AG04450 (cell line): ENCODE measurements at regions of chr20 and their contacts with region 1.

Region 1: GRCh38 chr20:54438145-54438544 is 37.2 kb upstream of the DOK5 start:
- DNase-seq: no peak
- H3K4me3 ChIP-seq: no peak overlapping the region
- H3K27ac ChIP-seq: no peak overlapping the region
- H3K27me3 ChIP-seq: no peaks in the 10 kb centered on the region
- CTCF ChIP-seq: no peak

Region 2: DNA sequence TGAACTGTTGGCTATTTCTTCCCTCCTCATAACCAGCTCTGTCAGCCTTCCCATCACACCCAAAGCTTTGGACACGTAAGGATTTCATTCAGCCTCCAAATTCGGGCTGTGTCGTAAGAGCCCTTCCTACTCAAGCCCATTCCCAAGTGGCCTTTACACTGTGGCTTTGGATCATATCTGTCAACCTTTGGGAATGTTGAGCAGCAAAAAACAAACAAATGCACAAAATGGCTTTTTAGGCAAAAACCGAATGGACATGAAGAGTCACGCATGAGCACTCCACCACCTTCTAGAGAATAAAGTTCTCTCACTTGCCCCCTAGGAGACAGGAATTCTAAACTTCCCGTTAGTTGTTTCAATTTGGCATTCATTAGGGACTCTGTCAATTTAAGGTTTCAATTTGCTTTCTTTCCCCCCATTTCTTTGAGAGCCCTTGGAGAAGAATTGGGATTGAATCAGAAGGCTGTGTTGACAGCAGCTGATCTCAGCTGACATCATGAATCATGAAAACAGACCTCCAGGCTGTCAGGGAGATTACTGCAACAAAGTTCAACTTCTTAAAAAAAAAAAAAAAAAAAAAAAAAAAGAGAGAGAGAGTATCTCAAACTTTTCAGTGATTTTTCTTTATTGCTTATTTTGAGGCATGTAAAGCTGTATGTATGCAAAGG is 478.1 kb before region 1 on chr20:
- CTCF ChIA-PET with region 1: interaction called, 14 read pairs
- POLR2A ChIA-PET with region 1: no interaction called
- DNase-seq: no peak
- H3K4me3 ChIP-seq: no peak overlapping the region
- H3K27ac ChIP-seq: no peak overlapping the region
- H3K27me3 ChIP-seq: no peaks in the 10 kb centered on the region
- CTCF ChIP-seq: no peak